Heart left ventricle (tissue), 16 donors: ENCODE measurements at regions of chr6 and their contacts with region 1.

Region 1: GRCh38 chr6:4351520-4352315 is 216.3 kb upstream of the ECI2 start:
- DNase-seq: peak; percentile 80 to 85 (median 82)
- ATAC-seq: peak; percentile 61 to 81 (median 75)
- H3K4me3 ChIP-seq: peak overlapping the region in 9 of 12 donors; percentile 7 to 43 (median 35)
- H3K27ac ChIP-seq: peak overlapping the region; percentile 55 to 86 (median 78)
- H3K4me1 ChIP-seq: peaks cover 0 to 39% (median 24%) of the 10 kb centered on the region in 12 donors
- H3K27me3 ChIP-seq: no peaks in the 10 kb centered on the region
- CTCF ChIP-seq: peak in 4 of 12 donors; percentile 11 to 36 (median 25)
- POLR2A ChIP-seq: no peak

Region 2: GRCh38 chr6:4313044-4313686 is 38.6 kb before region 1 on chr6:
- intact Hi-C with region 1: loop called in 1 of 10 experiments (anchors 2 kb)
- DNase-seq: peak in 3 of 5 donors; percentile 40 to 69 (median 44)
- ATAC-seq: peak; percentile 33 to 75 (median 56)
- H3K4me3 ChIP-seq: no peak overlapping the region
- H3K27ac ChIP-seq: peak overlapping the region in 9 of 12 donors; percentile 8 to 73 (median 39)
- H3K4me1 ChIP-seq: peaks cover 0 to 29% (median 20%) of the 10 kb centered on the region in 12 donors
- H3K27me3 ChIP-seq: no peaks in the 10 kb centered on the region
- CTCF ChIP-seq: peak in 11 of 12 donors; percentile 12 to 60 (median 50)
- POLR2A ChIP-seq: no peak

Region 3: DNA sequence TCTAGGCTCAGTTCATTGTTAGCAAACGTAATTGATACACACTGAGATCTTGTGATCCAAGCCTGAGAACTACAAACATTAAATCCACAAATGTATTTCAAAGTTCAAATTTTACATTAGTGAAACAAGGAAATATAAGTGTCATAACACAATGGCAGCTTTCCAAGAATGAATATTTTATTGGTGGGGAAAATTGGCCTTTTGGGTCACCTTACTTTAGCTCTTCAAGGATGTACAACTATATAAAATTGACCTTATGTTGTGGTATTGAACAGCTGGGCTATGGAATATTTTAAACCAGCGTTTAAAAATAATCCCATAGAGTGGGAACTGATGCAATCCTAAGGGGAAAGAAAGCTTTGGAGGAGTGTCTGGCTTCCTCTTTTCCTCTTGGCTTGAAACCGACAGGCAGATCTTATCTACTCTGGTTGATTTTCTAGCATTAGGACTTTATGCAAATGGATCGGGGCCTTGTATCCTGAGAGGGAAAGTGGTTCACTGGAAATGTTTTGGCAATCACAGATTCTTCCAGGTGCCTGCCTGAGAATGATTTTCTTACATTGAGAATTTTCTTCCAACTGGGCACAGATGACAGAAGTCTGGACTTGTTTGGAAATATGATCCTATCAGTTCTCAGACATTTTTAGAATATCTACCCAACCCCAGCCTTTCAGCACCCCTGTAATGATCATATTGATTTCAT is 31.6 kb before region 1 on chr6:
- intact Hi-C with region 1: loop called in 2 of 10 experiments (anchors 2 kb)
- DNase-seq: peak in 1 of 5 donors; percentile 31
- ATAC-seq: peak in 3 of 4 donors; percentile 21 to 65 (median 35)
- H3K4me3 ChIP-seq: no peak overlapping the region
- H3K27ac ChIP-seq: peak overlapping the region in 11 of 12 donors; percentile 8 to 68 (median 56)
- H3K4me1 ChIP-seq: peaks cover 0 to 63% (median 38%) of the 10 kb centered on the region in 12 donors
- H3K27me3 ChIP-seq: no peaks in the 10 kb centered on the region
- CTCF ChIP-seq: no peak
- POLR2A ChIP-seq: no peak

Region 4: GRCh38 chr6:4402439-4402976 is 50.8 kb after region 1 on chr6:
- intact Hi-C with region 1: loop called in 3 of 10 experiments (anchors 5 to 10 kb)
- DNase-seq: peak; percentile 49 to 64 (median 59)
- ATAC-seq: peak; percentile 72 to 92 (median 90)
- H3K4me3 ChIP-seq: peak overlapping the region in 1 of 12 donors; percentile 12
- H3K27ac ChIP-seq: peak overlapping the region; percentile 4 to 93 (median 74)
- H3K4me1 ChIP-seq: peaks cover 6 to 51% (median 20%) of the 10 kb centered on the region in 12 donors
- H3K27me3 ChIP-seq: no peaks in the 10 kb centered on the region
- CTCF ChIP-seq: no peak
- POLR2A ChIP-seq: no peak

Region 5: GRCh38 chr6:4936681-4937041 is 584.9 kb after region 1 on chr6:
- intact Hi-C with region 1: loop called in 1 of 10 experiments (anchors 5 kb)
- DNase-seq: no peak
- ATAC-seq: peak in 2 of 4 donors; percentile 33 to 52
- H3K4me3 ChIP-seq: no peak overlapping the region
- H3K27ac ChIP-seq: no peak overlapping the region
- H3K4me1 ChIP-seq: peaks cover 0 to 33% (median 14%) of the 10 kb centered on the region in 12 donors
- H3K27me3 ChIP-seq: no peaks in the 10 kb centered on the region
- CTCF ChIP-seq: peak; percentile 45 to 78 (median 65)
- POLR2A ChIP-seq: no peak